Left ventricle myocardium superior (tissue), 1 donor: ENCODE measurements at regions of chr10 and their contacts with region 1.

Region 1: GRCh38 chr10:17257466-17258321 is 29.7 kb downstream of the VIM start:
- DNase-seq: no peak
- ATAC-seq: peak; percentile 81

Region 2: GRCh38 chr10:16843252-16843870 is 414.3 kb before region 1 on chr10:
- intact Hi-C with region 1: loop called (anchors 5 kb)
- DNase-seq: no peak
- ATAC-seq: peak; percentile 64

Region 3: GRCh38 chr10:17217631-17218232 is 40.0 kb before region 1 on chr10:
- intact Hi-C with region 1: no loop called
- DNase-seq: no peak
- ATAC-seq: no peak

Region 4: GRCh38 chr10:17544465-17544864 is 286.8 kb after region 1 on chr10:
- intact Hi-C with region 1: no loop called
- DNase-seq: no peak
- ATAC-seq: no peak